ENCODE measurements at regions of chr15 and their contacts with region 1.

Region 1: DNA sequence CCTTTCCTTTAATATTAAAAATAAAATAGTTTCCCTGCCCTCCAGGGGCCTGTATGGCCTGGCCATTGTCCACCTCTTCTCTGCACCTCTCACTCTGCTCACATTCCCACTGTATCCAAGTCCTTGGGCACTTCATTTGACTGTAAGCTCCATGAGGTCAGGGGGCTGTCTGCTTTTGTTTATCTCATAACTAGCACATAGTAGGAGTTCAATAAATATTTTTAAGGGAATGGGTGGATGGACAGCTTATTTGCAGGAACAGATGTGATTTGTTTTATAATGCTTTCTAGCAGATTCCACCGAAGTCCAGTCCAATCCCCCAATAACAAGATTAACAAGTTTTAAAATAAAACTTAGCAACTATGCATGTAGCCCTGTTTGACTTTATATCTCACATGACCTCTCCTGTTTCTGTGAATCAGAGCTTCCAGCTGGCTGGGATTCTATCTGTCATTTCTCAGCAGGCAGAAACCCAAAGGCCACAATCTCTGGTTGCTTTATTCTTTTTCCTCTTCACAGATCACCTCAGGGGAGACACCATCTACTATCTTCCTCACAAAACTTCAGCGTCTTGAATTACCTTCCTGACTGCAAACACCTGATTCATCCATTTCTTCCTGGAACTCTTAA is 123.0 kb upstream of the NR2F2 start:
- DNase-seq: no peak
- ATAC-seq: no peak
- H3K4me3 Mint-ChIP-seq: no peak overlapping the region
- H3K27ac Mint-ChIP-seq: no peak overlapping the region
- H3K4me1 Mint-ChIP-seq: no peaks in the 10 kb centered on the region
- H3K27me3 Mint-ChIP-seq: no peaks in the 10 kb centered on the region

Region 2: GRCh38 chr15:96135166-96136093 is 72.1 kb before region 1 on chr15:
- CTCF ChIA-PET with region 1: no interaction called
- POLR2A ChIA-PET with region 1: no interaction called
- intact Hi-C with region 1: loop called in 1 of 2 experiments (anchors 2 kb)
- DNase-seq: no peak
- ATAC-seq: no peak
- H3K4me3 Mint-ChIP-seq: no peak overlapping the region
- H3K27ac Mint-ChIP-seq: no peak overlapping the region
- H3K4me1 Mint-ChIP-seq: no peaks in the 10 kb centered on the region
- H3K27me3 Mint-ChIP-seq: peaks cover 2% of the 10 kb centered on the region